SK-MEL-5 (cell line): ENCODE measurements at regions of chr10 and their contacts with region 1.

Region 1: GRCh38 chr10:112151524-112152039 is 32.0 kb downstream of the GPAM start:
- DNase-seq: no peak

Region 2: GRCh38 chr10:111944331-111944730 is 207.3 kb before region 1 on chr10:
- in situ Hi-C with region 1: no loop called
- DNase-seq: peak; percentile 1

Region 3: GRCh38 chr10:112209684-112210131 is 58.1 kb after region 1 on chr10:
- in situ Hi-C with region 1: no loop called
- DNase-seq: no peak

Region 4: GRCh38 chr10:112314822-112315474 is 163.4 kb after region 1 on chr10:
- in situ Hi-C with region 1: loop called (anchors 25 kb)
- DNase-seq: peak; percentile 73

Region 5: DNA sequence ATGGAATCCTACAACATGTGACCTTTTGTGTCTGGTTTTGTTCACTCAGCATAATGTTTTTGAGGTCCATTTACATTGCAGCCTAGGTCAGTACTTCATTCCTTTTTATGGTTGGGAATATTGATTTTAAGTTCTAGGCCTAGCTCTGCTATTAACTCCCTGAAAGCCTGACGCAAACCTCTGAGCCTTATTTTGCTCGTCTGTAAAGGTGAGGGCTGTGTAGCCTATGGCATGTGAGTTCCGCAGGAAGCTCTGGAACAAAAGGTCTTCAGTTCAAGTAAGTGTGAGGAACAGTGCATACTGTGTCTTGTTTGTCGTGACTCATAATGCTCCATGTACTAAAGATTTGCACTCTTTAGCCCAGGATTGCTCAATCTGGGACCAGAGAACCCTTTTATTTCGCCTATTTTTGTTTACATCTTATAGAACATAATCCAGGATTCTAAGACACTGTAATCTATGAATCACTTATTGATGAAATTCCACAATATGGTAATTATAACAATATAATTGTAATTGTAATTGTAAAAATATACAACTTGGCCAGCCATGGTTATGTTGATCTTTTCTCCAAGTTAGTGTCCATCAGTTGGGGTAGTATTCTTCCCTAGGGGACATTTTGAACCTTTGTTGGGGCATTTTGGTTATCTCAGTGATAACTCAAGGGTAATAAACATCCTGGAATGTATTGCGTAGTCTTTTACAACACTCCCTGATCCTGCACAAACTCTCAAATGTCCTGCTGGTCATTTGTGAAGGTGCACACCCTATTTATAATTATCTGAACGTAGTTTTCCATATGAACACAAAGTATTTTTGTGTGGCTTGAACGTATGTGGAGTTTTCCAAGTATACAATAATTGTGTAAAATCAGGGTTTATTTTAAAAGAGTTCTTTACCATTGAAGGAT is 480.2 kb after region 1 on chr10:
- in situ Hi-C with region 1: no loop called
- DNase-seq: peak; percentile 99